ENCODE measurements at regions of chr7 and their contacts with region 1.

Region 1: DNA sequence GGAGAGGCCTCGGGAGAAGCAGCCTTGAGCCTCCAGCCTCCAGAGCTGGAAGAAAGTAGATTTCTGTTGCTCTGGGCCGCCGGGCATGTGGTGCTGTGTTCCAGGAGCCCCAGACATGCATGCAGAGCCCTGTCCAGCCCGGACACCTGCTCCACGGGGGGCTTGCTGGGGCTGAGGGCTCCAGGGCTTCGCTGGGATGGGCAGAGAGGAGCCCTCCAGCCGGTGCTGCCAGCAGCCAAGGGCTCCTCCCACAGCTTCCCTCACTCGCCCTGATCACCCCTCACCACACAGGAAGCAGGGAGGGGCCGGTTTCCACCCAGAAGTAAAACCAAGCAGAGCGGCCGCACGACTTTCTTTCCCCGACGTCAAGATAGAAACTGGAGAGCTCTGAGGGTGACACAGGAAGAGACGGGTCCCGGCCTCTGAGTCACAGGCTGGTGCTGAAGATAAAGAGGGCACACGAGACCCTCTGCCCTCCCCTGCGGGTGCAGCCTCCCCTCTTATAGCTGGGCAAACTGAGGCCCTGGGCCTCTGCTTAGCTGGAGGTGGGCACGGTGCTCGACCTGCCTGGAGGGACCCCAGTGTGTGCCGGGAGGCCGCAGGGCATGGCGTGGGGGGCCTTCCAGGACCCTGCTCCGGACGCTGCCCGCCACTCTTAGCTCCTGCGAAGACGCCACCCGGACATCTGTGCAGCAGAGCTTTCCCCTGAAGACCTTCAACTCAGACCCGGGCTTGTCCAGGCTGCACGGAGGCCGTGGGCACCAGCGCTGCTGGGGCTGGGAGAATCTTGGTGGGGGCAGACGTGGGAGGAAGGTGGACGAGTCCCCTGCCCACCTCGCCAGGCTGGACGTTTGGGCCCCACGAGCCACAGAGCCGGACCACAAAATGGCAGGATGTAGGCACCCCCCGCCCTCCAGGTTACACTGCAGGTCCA is 31.1 kb downstream of the ADAP1 start:
- DNase-seq: peak; percentile 97
- ATAC-seq: peak; percentile 92
- H3K4me3 Mint-ChIP-seq: peak overlapping the region; percentile 72
- H3K27ac Mint-ChIP-seq: peak overlapping the region; percentile 93
- H3K4me1 Mint-ChIP-seq: peaks cover 39% of the 10 kb centered on the region
- H3K27me3 Mint-ChIP-seq: no peaks in the 10 kb centered on the region

Region 2: DNA sequence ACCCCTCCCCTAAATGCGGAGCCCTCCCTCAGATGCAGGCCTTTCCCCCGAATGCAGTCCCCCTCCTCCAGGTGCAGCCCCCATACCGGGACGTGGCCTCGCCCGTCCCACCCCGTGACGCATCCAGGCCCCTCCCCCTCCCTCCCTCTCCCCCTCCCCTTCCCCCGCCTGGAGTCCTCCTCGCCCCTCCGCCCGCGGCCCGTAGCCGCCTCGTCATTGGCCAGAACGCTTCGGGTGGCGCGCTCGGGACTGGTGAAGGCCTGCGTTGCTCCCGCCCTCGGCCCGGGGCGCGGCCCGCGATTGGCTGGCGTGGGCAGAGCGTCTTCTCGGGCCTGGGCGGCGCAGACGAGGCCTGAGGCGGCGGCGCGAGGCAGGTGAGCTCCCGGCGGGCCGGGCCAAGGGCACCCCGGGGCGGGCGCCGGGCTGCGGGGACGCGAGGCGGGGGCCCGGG is 107.0 kb before region 1 on chr7:
- CTCF ChIA-PET with region 1: no interaction called
- POLR2A ChIA-PET with region 1: no interaction called
- intact Hi-C with region 1: loop called in 1 of 2 experiments (anchors 2 kb)
- DNase-seq: peak; percentile 99
- ATAC-seq: peak; percentile 97
- H3K4me3 Mint-ChIP-seq: peak overlapping the region; percentile 60
- H3K27ac Mint-ChIP-seq: no peak overlapping the region
- H3K4me1 Mint-ChIP-seq: peaks cover 62% of the 10 kb centered on the region
- H3K27me3 Mint-ChIP-seq: peaks cover 6% of the 10 kb centered on the region

Region 3: DNA sequence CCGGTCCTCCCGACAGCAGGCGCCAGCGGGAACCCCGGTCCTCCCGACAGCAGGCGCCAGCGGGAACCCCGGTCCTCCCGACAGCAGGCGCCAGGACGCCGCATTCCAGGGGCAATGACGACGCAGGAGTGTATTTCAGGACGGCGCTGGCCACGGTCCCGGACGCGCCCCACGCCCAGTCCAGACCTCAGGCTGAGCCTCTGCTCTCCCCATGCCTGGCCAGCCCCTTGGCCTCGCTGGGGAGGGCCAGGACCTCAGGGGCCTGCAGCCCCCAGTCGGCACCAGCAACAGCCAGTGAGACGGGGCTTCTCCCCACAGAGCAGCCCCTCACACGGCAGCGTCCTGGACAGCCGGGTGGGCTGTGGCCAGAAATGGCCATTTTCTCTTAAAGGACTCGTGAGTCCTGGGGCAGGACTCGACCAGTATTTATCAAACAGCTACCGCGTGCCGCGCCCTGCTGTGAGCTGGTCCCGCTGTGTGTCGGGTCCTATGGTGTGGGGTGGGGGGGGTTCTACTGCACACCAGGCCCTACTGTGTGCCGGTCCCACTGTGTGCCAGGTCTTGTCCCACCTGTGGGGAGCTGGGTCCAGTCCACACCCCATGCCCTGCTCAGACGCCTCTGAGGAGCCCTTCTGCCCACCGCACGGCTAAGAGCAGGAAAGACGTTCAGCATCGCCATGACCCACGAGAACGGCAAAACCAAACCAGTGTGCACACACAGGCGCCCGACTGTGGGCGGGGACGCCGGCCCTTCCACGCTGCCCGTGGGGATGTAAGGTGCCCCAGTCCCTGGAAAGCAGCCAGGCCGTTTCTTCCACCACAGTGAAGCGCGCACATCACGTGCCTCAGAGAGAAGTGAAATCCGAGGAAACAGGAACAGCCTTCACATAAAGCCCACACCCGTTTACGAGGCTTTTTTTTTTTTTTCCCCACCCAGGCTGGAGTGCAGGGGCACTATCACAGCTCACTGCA is 13.7 kb before region 1 on chr7:
- CTCF ChIA-PET with region 1: interaction called, 5 read pairs
- POLR2A ChIA-PET with region 1: no interaction called
- intact Hi-C with region 1: loop called (anchors 1 kb)
- DNase-seq: peak; percentile 37
- ATAC-seq: peak; percentile 28
- H3K4me3 Mint-ChIP-seq: peak overlapping the region; percentile 30
- H3K27ac Mint-ChIP-seq: no peak overlapping the region
- H3K4me1 Mint-ChIP-seq: peaks cover 10% of the 10 kb centered on the region
- H3K27me3 Mint-ChIP-seq: no peaks in the 10 kb centered on the region

Region 4: DNA sequence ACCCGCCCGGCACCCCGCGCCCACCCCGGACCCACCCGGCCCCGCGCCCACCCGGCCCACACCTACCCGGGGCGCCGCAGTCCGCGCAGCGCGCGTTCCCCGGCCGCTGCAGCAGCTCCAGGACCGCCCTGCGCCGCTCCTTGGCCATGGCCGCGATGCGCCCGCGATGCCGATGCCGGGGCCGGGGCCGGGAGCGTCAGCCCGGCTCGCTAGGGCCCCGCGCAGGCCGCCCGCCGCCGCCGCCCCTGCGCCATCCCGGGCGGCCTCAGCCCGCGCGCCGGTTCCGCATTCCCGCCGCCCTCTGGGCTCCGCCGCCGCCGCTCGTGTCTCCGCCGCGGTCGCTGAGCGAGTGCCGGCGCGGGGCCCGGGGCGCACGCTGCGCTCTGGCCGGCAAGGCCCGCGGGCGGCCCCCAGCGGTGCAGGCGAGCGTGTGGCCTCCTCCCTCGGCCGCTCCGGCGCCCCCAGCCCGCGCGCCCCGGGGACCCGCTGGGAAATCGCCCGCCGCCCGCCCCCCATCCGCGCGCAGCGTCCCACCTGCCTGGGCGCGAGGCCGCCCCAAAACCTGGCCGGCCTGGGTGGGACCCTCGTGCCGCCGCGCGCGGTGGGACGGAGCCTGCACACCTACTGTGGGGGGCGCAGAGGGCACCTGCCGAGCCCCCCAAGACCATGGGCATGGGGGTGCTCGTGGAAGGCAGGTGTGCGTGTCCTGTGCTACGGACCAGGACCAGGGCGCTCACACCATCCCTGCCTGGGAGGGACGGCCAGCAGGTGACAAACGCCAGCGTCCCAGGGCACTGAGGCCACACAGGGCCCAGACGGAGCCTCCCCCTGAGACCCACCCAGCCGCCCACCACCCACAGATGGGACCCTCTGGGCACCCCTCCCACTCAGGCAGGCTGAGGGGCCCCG is 31.2 kb after region 1 on chr7 and contains the start of gene ADAP1:
- CTCF ChIA-PET with region 1: interaction called, 3 read pairs
- POLR2A ChIA-PET with region 1: interaction called, 3 read pairs
- intact Hi-C with region 1: loop called in 1 of 2 experiments (anchors 1 kb)
- DNase-seq: peak; percentile 76
- ATAC-seq: peak; percentile 85
- H3K4me3 Mint-ChIP-seq: peak within 1 kb of the TSS; percentile 63
- H3K27ac Mint-ChIP-seq: no peak within 1 kb of the TSS
- H3K4me1 Mint-ChIP-seq: no peaks in the 10 kb centered on the region
- H3K27me3 Mint-ChIP-seq: peaks cover 8% of the 10 kb centered on the region
- total RNA-seq, gene ADAP1: 13.1 to 14.8 TPM

Region 5: GRCh38 chr7:1175967-1176851 is 252.8 kb after region 1 on chr7:
- CTCF ChIA-PET with region 1: no interaction called
- POLR2A ChIA-PET with region 1: no interaction called
- intact Hi-C with region 1: loop called in 1 of 2 experiments (anchors 5 kb)
- DNase-seq: peak; percentile 92
- ATAC-seq: peak; percentile 82
- H3K4me3 Mint-ChIP-seq: peak overlapping the region; percentile 45
- H3K27ac Mint-ChIP-seq: peak overlapping the region; percentile 43
- H3K4me1 Mint-ChIP-seq: peaks cover 11% of the 10 kb centered on the region
- H3K27me3 Mint-ChIP-seq: peaks cover 8% of the 10 kb centered on the region

Region 6: DNA sequence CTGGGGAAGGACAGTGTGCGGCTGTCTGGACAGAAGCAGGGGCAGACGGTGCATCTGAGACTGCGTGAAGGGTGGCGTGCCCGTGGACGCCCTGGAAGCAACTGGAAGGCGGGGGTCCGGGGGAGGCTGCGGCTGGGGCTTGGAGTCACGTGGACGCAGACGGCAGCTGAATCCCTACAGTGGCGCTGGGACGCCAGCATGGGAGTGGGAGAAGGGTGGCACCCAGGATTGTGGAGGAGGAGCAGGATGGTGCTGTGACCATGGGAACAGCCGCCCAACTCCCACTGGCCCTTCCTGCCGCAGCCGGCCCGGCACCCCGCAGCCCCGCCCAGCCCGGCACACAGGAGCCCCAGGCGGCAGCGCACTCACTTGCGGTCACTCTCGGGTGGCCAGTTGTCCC is 571.1 kb after region 1 on chr7:
- CTCF ChIA-PET with region 1: no interaction called
- POLR2A ChIA-PET with region 1: no interaction called
- intact Hi-C with region 1: no loop called
- DNase-seq: no peak
- ATAC-seq: no peak
- H3K4me3 Mint-ChIP-seq: no peak overlapping the region
- H3K27ac Mint-ChIP-seq: no peak overlapping the region
- H3K4me1 Mint-ChIP-seq: no peaks in the 10 kb centered on the region
- H3K27me3 Mint-ChIP-seq: no peaks in the 10 kb centered on the region

Region 7: DNA sequence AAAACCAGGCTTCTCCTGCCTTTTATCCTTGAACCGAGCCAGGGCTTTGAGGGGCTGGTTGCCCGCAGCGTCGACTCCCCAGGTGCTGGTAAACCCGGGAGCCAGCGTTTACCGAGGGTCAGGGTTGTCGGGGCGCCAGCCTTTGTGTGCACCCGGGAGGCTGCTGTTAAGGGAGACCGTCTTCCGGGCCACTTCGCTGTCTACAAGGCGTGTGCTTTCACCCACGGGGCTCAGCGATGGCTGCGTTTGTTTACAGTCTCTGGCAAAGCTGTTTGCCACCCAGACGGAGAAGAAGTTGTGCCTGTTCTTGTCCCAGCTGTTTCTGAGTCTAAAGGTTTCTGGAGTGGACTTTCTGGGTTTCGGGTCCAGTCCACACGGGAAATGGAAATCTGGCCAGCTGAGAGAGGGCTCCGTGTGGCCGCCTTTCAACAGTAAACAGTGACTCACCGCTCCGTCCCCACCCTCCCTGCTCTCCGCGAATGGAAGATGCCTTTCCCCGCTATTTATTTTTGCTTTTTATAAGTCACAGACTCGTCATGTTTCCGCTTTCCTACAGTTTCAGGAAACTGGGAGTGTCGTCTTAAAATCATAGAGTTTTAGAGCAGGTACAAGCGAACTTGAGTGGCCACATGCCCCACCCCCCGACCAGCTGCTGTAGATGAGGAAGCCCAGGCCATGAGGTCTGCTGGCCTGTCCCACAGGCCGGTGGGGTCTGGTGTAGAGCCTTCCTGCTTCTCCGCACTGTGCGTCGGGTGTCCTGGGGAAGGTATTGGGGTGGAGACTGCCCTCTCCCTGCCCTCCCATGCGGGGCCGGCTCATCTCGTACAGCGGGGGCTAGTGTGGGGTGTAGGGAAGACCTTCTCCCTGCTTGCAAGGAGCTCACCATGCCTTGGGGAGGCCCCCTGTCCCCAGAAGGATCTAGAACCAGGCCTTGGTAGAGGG is 609.4 kb after region 1 on chr7:
- CTCF ChIA-PET with region 1: no interaction called
- POLR2A ChIA-PET with region 1: no interaction called
- intact Hi-C with region 1: loop called in 1 of 2 experiments (anchors 5 kb)
- DNase-seq: peak; percentile 78
- ATAC-seq: peak; percentile 65
- H3K4me3 Mint-ChIP-seq: peak overlapping the region; percentile 89
- H3K27ac Mint-ChIP-seq: peak overlapping the region; percentile 89
- H3K4me1 Mint-ChIP-seq: peaks cover 27% of the 10 kb centered on the region
- H3K27me3 Mint-ChIP-seq: no peaks in the 10 kb centered on the region